Activated CD8-positive, alpha-beta T cell treated with anti-CD3 and anti-CD28 coated beads, Interleukin-2, amount 10 ng/mL, durations not matched to agents 7 days and 5 days (primary cell): ENCODE measurements at regions of chr17 and their contacts with region 1.

Region 1: DNA sequence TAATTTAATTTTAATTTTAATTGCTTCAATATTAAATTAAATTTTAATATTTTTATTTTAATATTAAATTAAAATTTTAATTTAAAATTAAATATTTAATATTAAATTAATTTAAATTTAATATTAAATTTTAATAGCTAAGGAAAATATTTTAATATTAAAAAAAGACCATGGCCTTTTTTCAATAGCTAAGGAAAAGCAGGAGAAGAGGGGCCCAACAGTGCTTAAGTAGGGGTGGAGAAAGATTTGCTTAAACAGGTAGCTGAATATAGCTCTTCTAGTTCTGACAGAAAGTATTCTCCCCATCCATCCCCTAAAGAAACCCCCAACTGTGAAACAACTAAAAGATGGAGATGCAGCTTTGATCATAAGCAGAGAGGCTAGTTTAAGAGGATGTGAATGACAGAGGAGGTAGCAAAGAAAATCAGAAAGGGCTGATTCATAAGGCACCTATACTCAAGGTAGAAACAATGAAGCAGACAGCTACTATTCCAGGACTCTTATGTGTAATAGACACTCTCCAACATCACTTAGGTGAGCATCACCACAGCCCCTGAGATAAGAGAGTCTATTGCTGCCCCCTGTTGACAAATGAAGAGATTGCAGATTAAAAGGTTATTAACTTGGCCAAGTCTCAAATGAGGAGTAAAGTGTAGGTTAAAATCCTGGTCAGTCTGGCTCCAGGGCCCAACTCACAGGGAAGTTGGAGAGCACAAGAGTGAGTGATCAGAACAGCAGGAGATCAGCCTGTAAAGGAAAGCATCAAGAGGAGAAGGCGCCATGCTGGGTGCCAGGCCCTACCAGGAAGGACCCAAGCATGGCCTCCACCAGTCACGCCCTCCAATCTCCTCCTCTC is 7.8 kb upstream of the RNASEK start:
- DNase-seq: peak; percentile 70
- ATAC-seq: peak; percentile 96
- H3K4me3 Mint-ChIP-seq: no peak overlapping the region
- H3K27ac Mint-ChIP-seq: peak overlapping the region; percentile 47
- H3K4me1 Mint-ChIP-seq: peaks cover 24% of the 10 kb centered on the region
- H3K27me3 Mint-ChIP-seq: no peaks in the 10 kb centered on the region

Region 2: DNA sequence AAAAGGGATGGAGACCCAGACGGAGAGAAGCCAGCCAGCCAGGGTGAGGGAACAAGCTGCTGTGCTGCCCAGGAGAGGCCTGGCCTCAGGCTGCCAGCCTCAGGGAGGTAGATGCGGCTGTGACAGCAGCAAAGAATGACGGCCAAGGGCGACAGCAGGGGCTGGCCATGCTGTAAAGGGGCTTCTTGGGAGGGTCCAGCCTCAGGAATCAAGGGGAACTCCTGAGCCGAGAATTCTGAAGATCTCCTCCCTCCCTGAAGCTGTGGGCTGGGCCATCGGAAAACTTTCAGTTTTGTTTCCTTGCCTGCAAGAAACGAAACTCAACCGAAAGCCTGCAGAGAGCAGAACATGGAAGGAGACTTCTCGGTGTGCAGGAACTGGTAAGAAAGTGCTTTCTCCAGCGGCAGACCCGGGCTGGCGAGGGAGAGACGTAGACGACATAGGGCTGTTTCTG is 248.9 kb before region 1 on chr17 and contains the start of gene XAF1:
- CTCF ChIA-PET with region 1: interaction called, 15 read pairs
- POLR2A ChIA-PET with region 1: no interaction called
- DNase-seq: peak; percentile 81
- ATAC-seq: peak; percentile 78
- H3K4me3 Mint-ChIP-seq: peak within 1 kb of the TSS; percentile 93
- H3K27ac Mint-ChIP-seq: peak within 1 kb of the TSS; percentile 96
- H3K4me1 Mint-ChIP-seq: peaks cover 65% of the 10 kb centered on the region
- H3K27me3 Mint-ChIP-seq: no peaks in the 10 kb centered on the region
- total RNA-seq, gene XAF1: 298 to 306 TPM

Region 3: GRCh38 chr17:6913608-6914443 is 90.8 kb before region 1 on chr17:
- CTCF ChIA-PET with region 1: interaction called, 206 read pairs
- POLR2A ChIA-PET with region 1: no interaction called
- DNase-seq: peak; percentile 87
- ATAC-seq: peak; percentile 83
- H3K4me3 Mint-ChIP-seq: peak overlapping the region; percentile 71
- H3K27ac Mint-ChIP-seq: no peak overlapping the region
- H3K4me1 Mint-ChIP-seq: peaks cover 14% of the 10 kb centered on the region
- H3K27me3 Mint-ChIP-seq: peaks cover 26% of the 10 kb centered on the region

Region 4: GRCh38 chr17:6927290-6928126 is 77.1 kb before region 1 on chr17:
- CTCF ChIA-PET with region 1: interaction called, 38 read pairs
- POLR2A ChIA-PET with region 1: no interaction called
- DNase-seq: no peak
- ATAC-seq: no peak
- H3K4me3 Mint-ChIP-seq: no peak overlapping the region
- H3K27ac Mint-ChIP-seq: no peak overlapping the region
- H3K4me1 Mint-ChIP-seq: peaks cover 25% of the 10 kb centered on the region
- H3K27me3 Mint-ChIP-seq: peaks cover 29% of the 10 kb centered on the region

Region 5: DNA sequence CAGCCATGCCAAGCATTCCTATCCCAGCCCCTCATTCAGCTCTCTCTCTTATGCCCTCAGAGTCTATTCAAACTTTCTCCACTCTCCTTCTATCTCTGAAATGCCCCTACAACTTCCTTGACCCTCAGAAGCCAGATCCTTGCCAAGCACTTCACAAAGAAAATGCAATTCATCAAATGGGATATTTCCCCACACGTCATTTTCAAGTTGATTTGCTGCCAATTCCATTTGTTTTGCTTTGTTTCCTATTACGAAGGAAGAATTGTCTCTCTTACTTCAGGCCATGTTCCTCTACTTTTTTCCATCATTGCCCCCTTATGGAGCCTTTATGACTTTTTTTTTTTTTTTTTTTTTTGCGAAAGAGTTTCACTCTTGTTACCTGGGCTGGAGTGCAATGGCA is 17.9 kb before region 1 on chr17:
- CTCF ChIA-PET with region 1: interaction called, 12 read pairs
- POLR2A ChIA-PET with region 1: no interaction called
- DNase-seq: no peak
- ATAC-seq: no peak
- H3K4me3 Mint-ChIP-seq: no peak overlapping the region
- H3K27ac Mint-ChIP-seq: no peak overlapping the region
- H3K4me1 Mint-ChIP-seq: peaks cover 16% of the 10 kb centered on the region
- H3K27me3 Mint-ChIP-seq: no peaks in the 10 kb centered on the region